ENCODE measurements at regions of chr11 and their contacts with region 1.

Region 1: DNA sequence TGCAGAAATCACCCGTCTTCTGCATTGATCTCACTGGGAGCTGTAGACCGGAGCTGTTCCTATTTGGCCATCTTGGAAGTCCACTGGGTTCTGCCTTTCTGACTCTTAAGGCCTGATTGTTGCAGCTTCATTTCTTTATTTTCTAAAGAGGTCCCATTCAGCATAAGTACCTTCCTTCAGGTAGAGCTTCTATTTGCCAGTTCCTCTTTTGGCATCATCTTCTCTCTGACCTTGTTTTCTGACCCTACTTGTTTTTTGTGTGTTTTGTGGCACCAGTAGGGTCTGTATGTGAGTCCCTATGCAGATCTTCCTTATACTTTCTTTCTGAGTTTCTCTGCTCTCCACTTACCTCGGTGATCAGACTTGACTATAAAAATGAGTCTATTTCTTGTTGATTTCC is 77.5 kb upstream of the RRM1 start:
- DNase-seq: no peak
- ATAC-seq: no peak
- H3K4me3 ChIP-seq: no peak overlapping the region
- H3K27ac ChIP-seq: no peak overlapping the region
- H3K4me1 ChIP-seq: no peaks in the 10 kb centered on the region
- H3K27me3 ChIP-seq: no peaks in the 10 kb centered on the region
- CTCF ChIP-seq: no peak

Region 2: DNA sequence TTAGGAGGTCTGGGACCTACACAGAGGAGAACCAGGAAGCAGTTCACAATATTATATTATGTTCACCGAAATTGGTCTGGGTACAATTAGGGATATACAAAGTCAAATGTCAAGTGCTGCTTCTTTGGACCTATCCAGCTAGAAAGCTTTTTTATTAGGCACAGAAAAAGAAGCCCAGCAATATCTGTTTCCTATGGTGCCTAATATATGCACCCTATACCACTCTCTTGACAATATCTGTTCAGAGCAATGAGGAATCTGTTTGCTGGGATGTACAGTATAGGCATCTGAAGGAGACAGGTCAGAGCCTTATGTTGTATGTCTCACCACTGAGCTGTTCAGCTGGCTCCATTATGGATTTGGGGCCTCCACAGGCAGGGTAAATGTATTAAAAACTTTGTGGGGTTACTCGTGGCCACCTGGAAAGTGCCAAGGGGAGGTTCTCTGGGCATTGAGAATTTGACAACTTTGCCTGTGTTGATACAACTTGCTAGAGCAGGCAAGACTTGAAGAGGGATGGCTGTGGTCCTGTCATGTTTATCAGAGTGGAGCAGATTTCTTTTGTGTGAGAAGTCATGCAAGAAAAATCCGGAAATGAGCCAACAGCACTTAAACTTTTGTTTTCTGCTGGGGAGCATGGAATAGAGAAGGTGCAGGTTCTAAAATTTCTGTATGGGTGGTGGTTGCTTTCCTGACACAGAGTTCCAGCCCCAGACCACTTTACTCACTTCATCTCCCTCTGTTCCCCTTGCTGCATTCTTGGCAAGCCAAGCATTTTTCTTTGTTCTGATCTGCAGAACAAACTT is 151.5 kb before region 1 on chr11:
- CTCF ChIA-PET with region 1: no interaction called
- POLR2A ChIA-PET with region 1: no interaction called
- in situ Hi-C with region 1: no loop called
- intact Hi-C with region 1: no loop called
- DNase-seq: no peak
- ATAC-seq: peak; percentile 35
- H3K4me3 ChIP-seq: no peak overlapping the region
- H3K27ac ChIP-seq: peak overlapping the region; percentile 36
- H3K4me1 ChIP-seq: peaks cover 32% of the 10 kb centered on the region
- H3K27me3 ChIP-seq: no peaks in the 10 kb centered on the region
- CTCF ChIP-seq: no peak

Region 3: GRCh38 chr11:3984896-3985295 is 32.2 kb before region 1 on chr11:
- CTCF ChIA-PET with region 1: no interaction called
- POLR2A ChIA-PET with region 1: no interaction called
- in situ Hi-C with region 1: no loop called
- intact Hi-C with region 1: loop called (anchors 1 kb)
- DNase-seq: no peak
- ATAC-seq: no peak
- H3K4me3 ChIP-seq: no peak overlapping the region
- H3K27ac ChIP-seq: no peak overlapping the region
- H3K4me1 ChIP-seq: no peaks in the 10 kb centered on the region
- H3K27me3 ChIP-seq: no peaks in the 10 kb centered on the region
- CTCF ChIP-seq: peak; percentile 15; the same call in 1 of the 2 replicates

Region 4: DNA sequence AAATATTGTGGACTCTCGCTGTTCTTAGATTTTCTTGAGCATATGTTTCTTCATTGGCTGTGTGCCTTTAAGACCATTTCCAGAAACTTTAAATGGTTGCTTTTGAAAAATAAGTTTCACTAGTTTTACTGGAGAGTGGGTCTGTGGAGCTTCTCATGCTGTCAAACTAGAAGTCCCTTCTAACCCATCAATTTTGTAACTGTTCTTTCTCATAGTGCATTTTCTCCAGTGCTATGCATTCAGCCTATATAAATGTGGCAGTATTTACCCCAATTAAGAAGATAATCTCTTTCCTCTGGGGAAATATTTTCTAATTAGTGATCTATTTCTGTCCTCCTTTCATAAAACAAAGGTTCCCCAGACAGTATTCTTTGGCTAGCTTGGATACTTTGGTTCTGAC is 20.5 kb before region 1 on chr11:
- CTCF ChIA-PET with region 1: no interaction called
- POLR2A ChIA-PET with region 1: no interaction called
- in situ Hi-C with region 1: no loop called
- intact Hi-C with region 1: no loop called
- DNase-seq: no peak
- ATAC-seq: no peak
- H3K4me3 ChIP-seq: no peak overlapping the region
- H3K27ac ChIP-seq: no peak overlapping the region
- H3K4me1 ChIP-seq: no peaks in the 10 kb centered on the region
- H3K27me3 ChIP-seq: no peaks in the 10 kb centered on the region
- CTCF ChIP-seq: no peak